Activated CD4-positive, alpha-beta memory T cell treated with anti-CD3 and anti-CD28 coated beads, Interleukin-2, amount 10 ng/mL, durations not matched to agents 7 days and 5 days (primary cell): ENCODE measurements at regions of chr17 and their contacts with region 1.

Region 1: DNA sequence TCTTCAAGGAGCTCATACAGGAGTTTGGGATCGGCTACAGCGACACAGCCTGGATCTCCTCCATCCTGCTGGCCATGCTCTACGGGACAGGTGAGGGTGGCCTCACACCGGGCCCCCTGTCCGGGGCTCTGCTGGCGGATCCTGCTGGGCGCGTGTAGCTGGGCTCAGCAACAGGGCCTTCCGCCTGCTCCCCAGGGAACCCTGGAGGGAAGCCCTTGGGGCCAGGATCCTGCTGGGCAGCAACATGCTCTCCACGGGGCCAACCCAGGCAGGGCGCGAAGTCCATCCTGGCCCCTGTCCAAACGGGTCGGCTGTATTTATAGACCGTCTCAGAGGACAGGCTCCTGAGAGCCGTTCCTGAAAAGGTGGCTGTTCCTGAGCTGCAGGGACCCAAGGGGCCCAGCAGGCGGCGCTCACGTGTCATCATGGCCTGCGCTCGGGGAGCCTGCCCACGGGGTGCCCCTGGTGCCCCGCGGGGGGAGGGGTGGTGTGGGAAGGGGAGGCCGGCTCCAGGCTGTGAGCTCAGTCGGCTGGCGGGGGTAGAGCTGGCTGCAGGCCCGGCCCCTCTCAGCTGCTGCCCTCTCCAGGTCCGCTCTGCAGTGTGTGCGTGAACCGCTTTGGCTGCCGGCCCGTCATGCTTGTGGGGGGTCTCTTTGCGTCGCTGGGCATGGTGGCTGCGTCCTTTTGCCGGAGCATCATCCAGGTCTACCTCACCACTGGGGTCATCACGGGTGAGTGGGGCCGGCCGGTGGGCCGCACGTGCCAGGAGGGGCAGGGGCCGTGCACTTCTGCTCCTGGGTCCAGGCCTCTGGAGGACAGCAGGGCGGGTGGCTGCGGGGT is 7.5 kb downstream of the SLC16A3 start:
- DNase-seq: peak; percentile 75
- H3K4me3 Mint-ChIP-seq: no peak overlapping the region
- H3K27ac Mint-ChIP-seq: peak overlapping the region; percentile 44
- H3K4me1 Mint-ChIP-seq: peaks cover 63% of the 10 kb centered on the region
- H3K27me3 Mint-ChIP-seq: no peaks in the 10 kb centered on the region

Region 2: GRCh38 chr17:82205719-82206508 is 30.4 kb before region 1 on chr17:
- CTCF ChIA-PET with region 1: interaction called, 11 read pairs
- POLR2A ChIA-PET with region 1: interaction called, 4 read pairs
- DNase-seq: peak; percentile 86
- H3K4me3 Mint-ChIP-seq: peak overlapping the region; percentile 31
- H3K27ac Mint-ChIP-seq: peak overlapping the region; percentile 92
- H3K4me1 Mint-ChIP-seq: peaks cover 46% of the 10 kb centered on the region
- H3K27me3 Mint-ChIP-seq: no peaks in the 10 kb centered on the region

Region 3: GRCh38 chr17:82273327-82274133 is 37.2 kb after region 1 on chr17 and contains the start of gene CSNK1D:
- CTCF ChIA-PET with region 1: no interaction called
- POLR2A ChIA-PET with region 1: no interaction called
- DNase-seq: peak; percentile 94
- H3K4me3 Mint-ChIP-seq: peak within 1 kb of the TSS; percentile 97
- H3K27ac Mint-ChIP-seq: peak within 1 kb of the TSS; percentile 93
- H3K4me1 Mint-ChIP-seq: peaks cover 41% of the 10 kb centered on the region
- H3K27me3 Mint-ChIP-seq: peaks cover 2% of the 10 kb centered on the region
- total RNA-seq, gene CSNK1D: 116 TPM

Region 4: GRCh38 chr17:82320956-82321927 is 84.9 kb after region 1 on chr17:
- CTCF ChIA-PET with region 1: interaction called, 20 read pairs
- POLR2A ChIA-PET with region 1: interaction called, 6 read pairs
- DNase-seq: peak; percentile 63
- H3K4me3 Mint-ChIP-seq: peak overlapping the region; percentile 64
- H3K27ac Mint-ChIP-seq: peak overlapping the region; percentile 68
- H3K4me1 Mint-ChIP-seq: peaks cover 28% of the 10 kb centered on the region
- H3K27me3 Mint-ChIP-seq: no peaks in the 10 kb centered on the region